Ascending aorta (tissue), 2 donors: ENCODE measurements at regions of chr16 and their contacts with region 1.

Region 1: GRCh38 chr16:31179747-31180459 is at the start of gene FUS:
- DNase-seq: peak; percentile 44 to 94
- H3K4me3 ChIP-seq: peak within 1 kb of the TSS; percentile 92 to 97
- H3K27ac ChIP-seq: peak within 1 kb of the TSS; percentile 98 to 99
- H3K4me1 ChIP-seq: peaks cover 5 to 35% of the 10 kb centered on the region in 2 donors
- H3K27me3 ChIP-seq: no peaks in the 10 kb centered on the region
- CTCF ChIP-seq: peak in 1 of 3 experiments; percentile 3
- total RNA-seq, gene FUS: 166 TPM

Region 2: GRCh38 chr16:31073968-31074813 is 105.7 kb before region 1 on chr16 and contains the starts of genes ZNF646 and ZNF668:
- intact Hi-C with region 1: loop called (anchors 1 kb)
- DNase-seq: peak; percentile 91 to 99
- H3K4me3 ChIP-seq: peak within 1 kb of the TSS; percentile 73 to 87
- H3K27ac ChIP-seq: peak within 1 kb of the TSS; percentile 87 to 91
- H3K4me1 ChIP-seq: peaks cover 0 to 20% of the 10 kb centered on the region in 2 donors
- H3K27me3 ChIP-seq: no peaks in the 10 kb centered on the region
- CTCF ChIP-seq: no peak
- total RNA-seq, gene ZNF646: 11.6 TPM
- total RNA-seq, gene ZNF668: 12.2 TPM

Region 3: DNA sequence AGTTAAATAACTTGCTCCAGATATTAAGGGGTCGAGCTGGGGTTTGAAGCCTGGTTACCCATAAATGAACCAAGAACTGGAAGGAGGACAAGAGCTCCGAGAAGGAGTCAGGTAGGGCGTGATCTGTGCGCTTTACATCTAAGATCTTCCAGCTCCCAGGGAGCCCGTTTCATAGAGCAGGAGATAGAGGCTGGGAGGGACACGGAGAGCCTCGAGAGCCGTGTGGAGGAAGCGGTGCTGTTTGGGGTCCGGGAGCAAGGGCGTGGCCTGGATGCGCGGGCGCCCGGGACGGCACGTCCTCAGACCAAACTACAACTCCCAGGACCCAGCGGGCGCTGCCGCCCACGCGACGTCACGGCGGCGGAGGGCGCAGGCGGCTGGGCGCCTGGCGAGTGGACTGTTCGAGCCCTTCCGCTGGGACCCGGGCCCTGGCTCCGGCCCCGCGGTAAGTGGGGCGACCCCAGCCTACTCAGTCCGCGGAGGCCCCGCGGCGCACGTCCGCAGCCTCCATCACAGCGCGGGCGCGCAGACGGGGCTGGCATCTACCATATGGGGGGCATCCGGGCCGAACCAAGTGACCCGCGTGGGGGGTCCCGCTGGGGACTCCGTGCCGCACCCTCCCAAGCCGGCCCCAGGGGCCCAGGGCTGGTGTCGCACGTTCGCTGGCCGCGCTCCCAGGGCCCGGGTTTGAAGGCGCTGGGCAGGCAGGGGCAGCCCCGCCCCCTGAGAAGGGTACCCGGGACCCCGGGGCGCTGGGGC is 71.7 kb before region 1 on chr16 and contains the start of gene BCKDK:
- intact Hi-C with region 1: loop called (anchors 5 kb)
- DNase-seq: peak in 1 of 2 donors; percentile 85
- H3K4me3 ChIP-seq: peak within 1 kb of the TSS; percentile 90 to 99
- H3K27ac ChIP-seq: peak within 1 kb of the TSS; percentile 92 to 97
- H3K4me1 ChIP-seq: peaks cover 9 to 17% of the 10 kb centered on the region in 2 donors
- H3K27me3 ChIP-seq: no peaks in the 10 kb centered on the region
- CTCF ChIP-seq: no peak
- total RNA-seq, gene BCKDK: 85.8 TPM

Region 4: DNA sequence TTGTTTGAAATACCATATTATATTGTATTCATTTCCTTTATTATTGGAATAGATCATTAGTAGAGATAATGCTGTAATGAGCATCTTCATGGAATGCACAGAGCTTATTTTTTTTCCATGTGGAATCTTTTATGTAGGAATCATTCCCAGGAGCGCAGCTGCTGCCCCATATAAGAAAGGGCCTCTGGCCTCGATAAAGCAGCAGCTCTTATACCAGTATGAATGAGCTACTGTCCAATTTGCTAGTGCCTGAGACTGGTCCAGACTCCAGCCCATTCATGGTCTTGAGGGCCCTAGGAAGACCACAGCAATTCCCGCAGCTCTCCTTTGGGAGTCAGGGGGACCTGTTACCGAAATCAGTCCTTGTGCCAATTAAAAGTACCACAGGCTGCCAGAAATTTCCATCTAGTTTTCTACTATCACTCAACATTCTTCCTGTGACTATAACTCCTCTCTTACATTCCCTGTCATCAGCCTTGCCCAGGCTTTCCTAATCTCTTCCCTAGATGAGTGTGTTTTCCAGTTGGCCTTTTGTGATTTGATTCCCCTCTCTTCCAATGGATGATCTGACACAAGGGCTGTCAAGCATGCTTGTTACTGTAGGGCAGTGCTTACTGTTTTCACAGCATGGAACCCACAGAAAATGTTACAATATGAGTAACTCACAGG is 260.7 kb after region 1 on chr16:
- intact Hi-C with region 1: loop called (anchors 5 kb)
- DNase-seq: no peak
- H3K4me3 ChIP-seq: no peak overlapping the region
- H3K27ac ChIP-seq: no peak overlapping the region
- H3K4me1 ChIP-seq: no peaks in the 10 kb centered on the region
- H3K27me3 ChIP-seq: no peaks in the 10 kb centered on the region
- CTCF ChIP-seq: no peak

Region 5: GRCh38 chr16:31507929-31508705 is 328.2 kb after region 1 on chr16 and contains the start of gene RUSF1:
- intact Hi-C with region 1: loop called (anchors 5 kb)
- DNase-seq: peak; percentile 67 to 96
- H3K4me3 ChIP-seq: peak within 1 kb of the TSS; percentile 95 to 97
- H3K27ac ChIP-seq: peak within 1 kb of the TSS; percentile 96 to 97
- H3K4me1 ChIP-seq: peaks cover 5 to 24% of the 10 kb centered on the region in 2 donors
- H3K27me3 ChIP-seq: no peaks in the 10 kb centered on the region
- CTCF ChIP-seq: no peak
- total RNA-seq, gene RUSF1: 80.9 TPM

Region 6: DNA sequence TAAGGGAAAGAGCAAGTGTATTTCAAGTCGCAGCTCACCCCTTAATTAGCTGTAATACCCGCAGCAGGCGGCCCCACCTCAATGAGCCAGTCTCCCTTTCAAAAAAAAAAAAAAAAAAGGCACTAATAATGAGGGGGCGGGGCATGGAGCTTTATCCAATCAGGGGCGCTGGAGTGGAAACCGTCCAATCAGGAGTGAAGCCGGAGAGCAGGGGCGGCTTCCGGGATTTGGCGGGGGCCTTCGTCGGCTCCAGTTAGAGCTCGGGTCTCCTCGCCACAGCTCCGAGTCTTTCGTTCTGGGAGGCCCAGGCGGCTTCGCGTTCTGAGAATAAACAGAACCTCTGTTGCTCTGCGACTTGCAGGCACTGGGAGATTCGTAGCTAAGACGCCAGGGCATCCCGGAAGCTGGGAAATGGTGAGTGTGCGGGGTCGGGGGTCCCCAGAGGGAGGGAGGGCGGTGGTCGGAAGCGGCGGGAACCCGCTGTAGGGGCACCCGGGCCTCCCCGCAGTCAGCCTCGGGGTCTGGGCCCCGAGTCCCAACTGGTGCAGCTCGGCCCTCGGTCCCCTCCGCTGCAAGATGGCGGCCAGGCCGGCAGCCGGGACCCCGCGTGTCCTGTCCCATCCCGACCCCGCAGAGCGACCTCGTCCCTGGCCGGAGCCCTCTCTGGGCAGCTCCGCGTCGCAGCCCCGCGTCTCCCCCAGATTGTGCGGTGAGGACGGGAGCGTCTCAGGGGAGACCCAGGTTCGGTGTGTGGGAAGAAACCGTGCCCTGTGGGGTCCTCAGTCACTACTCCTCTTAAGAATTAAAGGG is 693.9 kb after region 1 on chr16 and contains the start of gene ZNF267:
- intact Hi-C with region 1: loop called (anchors 5 kb)
- DNase-seq: peak; percentile 82 to 98
- H3K4me3 ChIP-seq: peak within 1 kb of the TSS; percentile 75 to 87
- H3K27ac ChIP-seq: peak within 1 kb of the TSS; percentile 88 to 92
- H3K4me1 ChIP-seq: peaks cover 3 to 14% of the 10 kb centered on the region in 2 donors
- H3K27me3 ChIP-seq: no peaks in the 10 kb centered on the region
- CTCF ChIP-seq: no peak
- total RNA-seq, gene ZNF267: 3.8 TPM